H1 (cell line): ENCODE measurements at regions of chr1 and their contacts with region 1.

Region 1: DNA sequence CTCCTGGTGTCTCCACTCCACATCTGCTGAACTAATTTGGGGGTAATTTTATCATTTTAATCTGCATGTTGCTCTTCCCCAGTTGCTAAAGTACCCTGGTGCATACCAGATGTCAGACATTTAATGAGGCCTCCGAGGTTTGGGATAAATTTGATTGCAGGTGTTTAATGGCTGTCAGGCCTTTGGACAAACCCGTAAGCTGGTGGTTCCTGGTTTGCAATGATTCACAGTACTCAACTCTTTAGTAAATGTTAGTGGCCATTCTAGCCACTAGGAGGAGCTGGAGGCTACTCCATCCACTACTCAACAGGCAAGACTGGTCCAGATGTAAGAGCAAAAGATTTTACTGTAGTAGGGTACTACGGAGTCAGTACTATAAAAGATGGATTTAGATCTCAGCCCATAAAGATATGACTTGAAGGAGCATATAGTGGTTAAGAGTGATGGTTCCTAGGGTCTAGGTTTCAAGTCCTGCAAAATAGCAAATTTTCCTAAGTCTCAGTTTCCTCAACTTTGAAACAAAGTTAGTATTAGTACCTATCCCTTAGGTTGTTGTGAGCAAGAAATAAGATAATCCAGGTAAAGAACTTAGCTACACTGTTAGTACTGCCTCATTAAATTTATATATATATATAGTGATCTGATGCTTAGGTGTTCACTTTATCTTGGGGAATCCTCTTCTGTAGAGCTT is 132.8 kb downstream of the SNX7 start:
- DNase-seq: peak in 1 of 2 experiments; percentile 19
- H3K4me3 ChIP-seq: no peak overlapping the region
- H3K27ac ChIP-seq: no peak overlapping the region
- H3K4me1 ChIP-seq: no peaks in the 10 kb centered on the region
- H3K27me3 ChIP-seq: no peaks in the 10 kb centered on the region
- CTCF ChIP-seq: peak in 2 of 3 experiments; percentile 75 to 78; a peak in 3 of 4 replicates
- EP300 ChIP-seq: no peak
- POLR2A ChIP-seq: no peak
- RAD21 ChIP-seq: peak; percentile 90 to 92

Region 2: DNA sequence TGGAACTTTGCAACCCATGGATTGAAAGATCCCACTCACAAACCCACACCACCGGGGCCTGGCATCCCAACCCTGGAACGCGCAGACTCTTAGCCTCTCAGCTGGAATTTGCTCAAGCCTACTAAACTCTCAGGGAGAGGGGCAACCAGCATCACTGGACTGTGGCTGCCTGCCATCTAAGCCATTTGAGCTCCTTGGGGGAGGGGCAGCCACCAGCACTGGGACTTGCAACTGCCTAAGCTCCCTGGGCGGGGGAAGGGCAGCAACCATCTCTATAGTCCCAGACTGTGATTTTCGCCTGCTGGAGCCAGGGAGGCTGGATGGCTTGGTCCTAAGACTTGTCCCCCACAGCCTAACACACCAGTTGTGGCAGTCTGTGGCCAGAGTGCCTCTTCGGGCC is 10.5 kb before region 1 on chr1:
- CTCF ChIA-PET with region 1: interaction called, 12 read pairs
- POLR2A ChIA-PET with region 1: interaction called, 3 read pairs
- DNase-seq: no peak
- H3K4me3 ChIP-seq: no peak overlapping the region
- H3K27ac ChIP-seq: no peak overlapping the region
- H3K4me1 ChIP-seq: peaks cover 0 to 6% (median 0%) of the 10 kb centered on the region in 4 experiments; a peak in 2 of 7 replicates
- H3K27me3 ChIP-seq: no peaks in the 10 kb centered on the region
- CTCF ChIP-seq: no peak
- EP300 ChIP-seq: no peak
- POLR2A ChIP-seq: no peak
- RAD21 ChIP-seq: no peak

Region 3: DNA sequence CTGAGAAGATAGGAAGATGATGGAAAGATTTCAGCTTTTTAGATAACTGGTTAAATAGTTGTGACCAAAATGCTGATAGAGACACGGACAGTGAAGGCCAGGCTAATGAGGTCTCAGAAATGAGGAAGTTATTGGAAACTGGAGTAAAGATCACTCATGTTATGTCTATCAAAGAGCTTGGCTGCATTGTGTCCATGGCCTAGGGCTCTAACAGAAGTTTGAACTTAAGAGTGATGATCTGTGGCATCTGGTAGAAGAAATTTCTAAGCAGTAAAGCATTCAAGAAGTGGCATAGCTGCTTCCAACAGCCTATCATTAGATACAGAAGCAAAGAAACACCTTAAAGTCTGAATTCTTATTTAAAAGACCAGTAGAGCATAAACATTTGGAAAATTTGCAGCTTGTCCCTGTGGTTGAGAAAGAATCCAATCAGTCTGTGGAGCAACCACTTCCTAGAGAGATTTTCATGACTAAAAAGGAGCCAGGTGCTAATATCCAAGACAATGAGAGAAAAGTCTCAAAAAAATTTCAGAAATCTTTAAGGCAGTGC is 32.6 kb after region 1 on chr1:
- CTCF ChIA-PET with region 1: interaction called, 13 read pairs
- POLR2A ChIA-PET with region 1: no interaction called
- DNase-seq: no peak
- H3K4me3 ChIP-seq: no peak overlapping the region
- H3K27ac ChIP-seq: no peak overlapping the region
- H3K4me1 ChIP-seq: no peaks in the 10 kb centered on the region
- H3K27me3 ChIP-seq: no peaks in the 10 kb centered on the region
- CTCF ChIP-seq: no peak
- EP300 ChIP-seq: no peak
- POLR2A ChIP-seq: no peak
- RAD21 ChIP-seq: no peak